ENCODE measurements at regions of chr7 and their contacts with region 1.

Region 1: GRCh38 chr7:28389504-28390395 is 22.6 kb upstream of the CREB5 start:
- DNase-seq: peak; percentile 22
- CTCF ChIP-seq: peak; percentile 62

Region 2: GRCh38 chr7:28371846-28372245 is 17.9 kb before region 1 on chr7:
- CTCF ChIA-PET with region 1: no interaction called
- POLR2A ChIA-PET with region 1: no interaction called
- DNase-seq: no peak
- CTCF ChIP-seq: no peak

Region 3: DNA sequence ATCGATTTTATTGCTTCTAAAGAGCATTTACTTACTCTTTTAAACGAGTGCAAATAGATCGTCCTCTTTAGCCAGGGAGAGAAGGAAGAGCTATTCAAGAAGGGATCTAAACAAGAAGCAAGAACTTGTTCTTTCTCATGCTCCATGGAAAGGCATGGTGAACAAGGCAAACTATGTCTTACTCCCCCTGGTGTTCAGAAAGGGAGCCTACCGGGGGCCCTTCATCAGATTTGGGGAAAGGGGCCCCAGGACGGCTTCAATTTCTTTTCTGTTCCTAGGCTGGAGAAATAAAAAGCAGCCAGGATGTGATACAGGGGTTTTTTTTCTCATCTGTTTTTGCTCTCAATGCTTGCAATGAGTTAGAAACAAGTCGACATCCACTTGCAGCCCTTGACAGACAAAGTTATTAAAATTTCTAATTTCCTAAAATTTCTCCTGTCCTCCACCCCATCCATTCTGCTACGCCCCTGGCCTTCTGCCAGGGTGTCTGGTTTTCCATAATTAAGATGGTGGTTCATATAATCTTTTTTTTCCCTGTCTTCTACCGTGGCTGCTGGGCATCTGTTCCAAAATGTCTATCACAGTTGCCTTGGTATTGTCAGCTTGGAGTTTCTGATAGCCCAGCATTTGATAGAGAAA is 237.0 kb after region 1 on chr7:
- CTCF ChIA-PET with region 1: interaction called, 11 read pairs
- POLR2A ChIA-PET with region 1: no interaction called
- DNase-seq: peak; percentile 37
- CTCF ChIP-seq: peak; percentile 57